ENCODE measurements at regions of chr15 and their contacts with region 1.

Region 1: DNA sequence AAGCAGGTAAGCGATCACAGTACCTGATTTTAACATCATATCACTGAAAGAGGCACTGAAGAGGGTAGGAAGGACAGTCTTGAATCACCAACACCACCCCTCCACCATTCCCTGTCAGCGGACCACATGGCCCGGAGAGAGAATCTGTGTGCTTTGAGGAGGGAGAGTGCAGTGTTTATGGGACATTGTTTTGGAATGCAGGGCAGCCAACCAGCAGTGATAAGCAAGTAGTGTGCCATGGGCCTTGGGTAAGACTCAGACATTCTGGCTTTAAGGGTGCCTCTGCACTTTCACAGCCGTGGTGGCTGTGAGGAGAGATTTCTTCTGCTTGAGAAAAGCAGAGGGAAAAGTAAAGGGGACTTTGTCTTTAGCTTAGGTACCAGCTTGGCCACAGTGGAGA is 46.4 kb downstream of the FAM81A start:
- DNase-seq: no peak
- CTCF ChIP-seq: no peak

Region 2: GRCh38 chr15:59372352-59373211 is 111.8 kb before region 1 on chr15 and contains the start of gene MYO1E:
- in situ Hi-C with region 1: loop called (anchors 10 kb)
- DNase-seq: peak; percentile 85
- CTCF ChIP-seq: no peak

Region 3: GRCh38 chr15:59532770-59533379 is 48.5 kb after region 1 on chr15:
- in situ Hi-C with region 1: no loop called
- DNase-seq: peak; percentile 26
- CTCF ChIP-seq: peak; percentile 66

Measured in GM13977 (cell line).